Calu3 (cell line): ENCODE measurements at regions of chr7 and their contacts with region 1.

Region 1: DNA sequence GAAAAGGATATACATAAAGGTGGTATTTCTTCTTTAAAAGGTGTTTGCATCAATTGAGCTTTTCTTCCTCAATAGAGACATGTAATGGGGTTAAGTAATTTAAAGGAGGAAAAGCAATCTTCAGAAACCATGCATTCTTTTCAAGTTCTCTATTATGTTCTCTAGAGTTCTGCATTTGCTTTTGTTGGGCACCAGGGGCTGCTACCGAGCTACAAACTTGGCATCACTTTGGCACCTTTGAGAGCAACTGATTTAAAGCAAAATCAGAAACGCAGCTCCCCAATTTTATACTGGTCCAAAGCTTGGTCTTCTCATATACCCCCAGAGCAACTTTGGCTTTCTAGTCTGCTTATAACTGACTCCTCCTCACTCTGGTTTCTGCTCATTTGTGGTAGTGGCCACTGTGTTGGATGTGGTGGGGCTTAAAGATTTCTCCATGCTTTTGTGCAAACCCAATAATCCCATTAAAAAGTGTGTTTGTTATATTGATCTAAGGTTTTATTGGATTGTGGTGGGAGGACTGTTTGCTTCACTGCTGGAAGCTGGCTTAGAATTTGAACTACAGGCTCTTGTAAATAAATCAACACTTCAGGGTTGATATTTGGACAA is 712.1 kb downstream of the PHTF2 start:
- DNase-seq: peak; percentile 19
- H3K4me3 Mint-ChIP-seq: no peak overlapping the region
- H3K27ac Mint-ChIP-seq: no peak overlapping the region
- H3K4me1 Mint-ChIP-seq: no peaks in the 10 kb centered on the region
- H3K27me3 Mint-ChIP-seq: no peaks in the 10 kb centered on the region
- CTCF ChIP-seq: peak; percentile 43

Region 2: DNA sequence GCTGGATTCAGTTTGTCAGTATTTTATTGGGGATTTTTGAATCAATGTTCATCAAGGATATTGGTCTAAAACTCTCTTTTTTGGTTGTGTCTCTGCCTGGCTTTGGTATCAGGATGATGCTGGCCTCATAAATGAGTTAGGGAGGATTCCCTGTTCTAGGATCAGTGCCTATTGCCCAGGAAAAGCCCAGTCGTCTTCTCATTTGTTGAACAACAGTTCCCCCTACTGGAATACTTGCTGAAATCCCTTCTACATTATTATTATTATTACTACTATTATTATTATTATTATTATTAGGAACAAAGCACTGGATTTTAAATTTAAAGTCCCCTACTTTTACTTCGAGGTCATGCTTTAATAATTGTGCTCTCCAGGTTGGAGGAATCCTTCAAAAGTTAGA is 413.9 kb after region 1 on chr7:
- CTCF ChIA-PET with region 1: no interaction called
- intact Hi-C with region 1: loop called (anchors 2 kb)
- DNase-seq: peak; percentile 1
- H3K4me3 Mint-ChIP-seq: no peak overlapping the region
- H3K27ac Mint-ChIP-seq: no peak overlapping the region
- H3K4me1 Mint-ChIP-seq: no peaks in the 10 kb centered on the region
- H3K27me3 Mint-ChIP-seq: no peaks in the 10 kb centered on the region
- CTCF ChIP-seq: no peak

Region 3: DNA sequence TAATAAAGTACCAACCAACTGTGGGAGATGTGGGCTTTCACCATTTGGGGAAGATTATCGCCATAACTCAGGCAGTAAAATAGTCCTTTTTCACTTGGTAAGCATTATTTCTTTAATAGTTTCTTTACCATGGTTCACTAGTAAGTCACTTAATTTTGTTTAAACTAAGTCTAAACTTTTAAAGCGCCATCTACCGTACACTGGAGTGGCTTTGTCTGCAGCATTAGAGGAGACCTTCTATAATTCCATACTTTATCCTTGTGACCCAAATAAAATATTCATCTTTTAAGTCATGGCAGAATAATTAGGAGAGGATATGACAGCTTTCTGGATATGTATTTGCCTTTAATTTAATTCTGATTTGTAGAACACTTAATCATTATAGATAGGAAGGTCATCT is 474.8 kb after region 1 on chr7:
- CTCF ChIA-PET with region 1: no interaction called
- intact Hi-C with region 1: no loop called
- DNase-seq: no peak
- H3K4me3 Mint-ChIP-seq: no peak overlapping the region
- H3K27ac Mint-ChIP-seq: no peak overlapping the region
- H3K4me1 Mint-ChIP-seq: no peaks in the 10 kb centered on the region
- H3K27me3 Mint-ChIP-seq: no peaks in the 10 kb centered on the region
- CTCF ChIP-seq: no peak

Region 4: GRCh38 chr7:79176859-79177477 is 666.3 kb after region 1 on chr7:
- CTCF ChIA-PET with region 1: interaction called, 4 read pairs
- intact Hi-C with region 1: loop called (anchors 10 kb)
- DNase-seq: peak; percentile 20
- H3K4me3 Mint-ChIP-seq: no peak overlapping the region
- H3K27ac Mint-ChIP-seq: no peak overlapping the region
- H3K4me1 Mint-ChIP-seq: no peaks in the 10 kb centered on the region
- H3K27me3 Mint-ChIP-seq: no peaks in the 10 kb centered on the region
- CTCF ChIP-seq: peak; percentile 21